ENCODE measurements at regions of chr15 and their contacts with region 1.

Region 1: GRCh38 chr15:68252925-68253534 is 23.5 kb upstream of the CLN6 start:
- DNase-seq: no peak
- ATAC-seq: peak in 3 of 4 donors; percentile 29 to 45 (median 40)
- H3K4me3 ChIP-seq: no peak overlapping the region
- H3K27ac ChIP-seq: peak overlapping the region in 1 of 12 donors; percentile 2
- H3K4me1 ChIP-seq: peaks cover 0 to 19% (median 5%) of the 10 kb centered on the region in 12 donors
- H3K27me3 ChIP-seq: no peaks in the 10 kb centered on the region
- CTCF ChIP-seq: peak; percentile 80 to 93 (median 87)
- POLR2A ChIP-seq: no peak

Region 2: GRCh38 chr15:68229386-68230156 is 23.5 kb before region 1 on chr15 and contains the start of gene CLN6:
- intact Hi-C with region 1: no loop called
- DNase-seq: peak; percentile 82 to 91 (median 85)
- ATAC-seq: peak; percentile 78 to 98 (median 94)
- H3K4me3 ChIP-seq: peak within 1 kb of the TSS; percentile 78 to 99 (median 93)
- H3K27ac ChIP-seq: peak within 1 kb of the TSS in 11 of 12 donors; percentile 61 to 90 (median 78)
- H3K4me1 ChIP-seq: peaks cover 0 to 42% (median 14%) of the 10 kb centered on the region in 12 donors
- H3K27me3 ChIP-seq: no peaks in the 10 kb centered on the region
- CTCF ChIP-seq: peak in 2 of 12 donors; percentile 5 to 11
- POLR2A ChIP-seq: peak in 1 of 2 donors; percentile 56
- total RNA-seq, gene CLN6: 5.6 to 24.1 (median 8.9) TPM

Region 3: GRCh38 chr15:68277603-68278344 is 24.7 kb after region 1 on chr15 and contains the start of gene FEM1B:
- intact Hi-C with region 1: loop called in 1 of 10 experiments (anchors 2 kb)
- DNase-seq: peak; percentile 92 to 95 (median 93)
- ATAC-seq: peak; percentile 90 to 95 (median 94)
- H3K4me3 ChIP-seq: peak within 1 kb of the TSS; percentile 62 to 98 (median 82)
- H3K27ac ChIP-seq: peak within 1 kb of the TSS; percentile 93 to 100 (median 98)
- H3K4me1 ChIP-seq: peaks cover 6 to 77% (median 53%) of the 10 kb centered on the region in 12 donors
- H3K27me3 ChIP-seq: no peaks in the 10 kb centered on the region
- CTCF ChIP-seq: peak in 2 of 12 donors; percentile 12 to 13
- POLR2A ChIP-seq: peak in 1 of 2 donors; percentile 19
- total RNA-seq, gene FEM1B: 30.2 to 94.0 (median 61.2) TPM

Region 4: GRCh38 chr15:68298882-68299381 is 45.9 kb after region 1 on chr15:
- intact Hi-C with region 1: loop called in 5 of 10 experiments (anchors 5 kb)
- DNase-seq: no peak
- ATAC-seq: peak in 3 of 4 donors; percentile 51 to 69 (median 61)
- H3K4me3 ChIP-seq: peak overlapping the region in 10 of 12 donors; percentile 8 to 53 (median 40)
- H3K27ac ChIP-seq: peak overlapping the region in 11 of 12 donors; percentile 13 to 78 (median 47)
- H3K4me1 ChIP-seq: peaks cover 0 to 60% (median 27%) of the 10 kb centered on the region in 12 donors
- H3K27me3 ChIP-seq: no peaks in the 10 kb centered on the region
- CTCF ChIP-seq: no peak
- POLR2A ChIP-seq: no peak

Region 5: DNA sequence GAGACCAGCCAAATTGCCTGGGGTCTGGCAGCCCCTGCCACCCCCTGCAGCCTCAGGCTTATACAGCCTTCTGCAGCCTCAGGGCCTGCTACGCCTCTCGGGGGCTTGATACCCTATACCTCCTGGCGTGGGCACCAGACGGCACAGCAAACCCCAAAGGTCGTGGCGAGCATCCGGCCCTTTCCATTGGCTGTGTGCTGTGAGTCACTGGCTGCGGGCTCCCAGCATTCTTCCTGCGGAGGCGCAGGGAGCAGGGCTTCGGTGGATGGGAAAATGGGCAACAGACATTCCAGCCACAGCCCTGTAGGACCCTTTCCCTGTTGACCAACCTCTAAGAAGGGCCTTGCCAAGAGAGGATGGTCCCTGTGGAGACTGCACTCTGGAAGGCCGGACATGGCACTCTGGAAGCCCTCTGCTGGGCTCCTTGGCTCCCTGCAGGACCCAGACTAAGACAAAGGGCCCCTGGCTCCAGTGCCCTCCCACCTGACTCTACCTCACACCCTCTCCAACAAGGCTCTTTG is 119.3 kb after region 1 on chr15:
- intact Hi-C with region 1: loop called in 1 of 10 experiments (anchors 5 kb)
- DNase-seq: peak in 3 of 5 donors; percentile 25 to 53 (median 29)
- ATAC-seq: peak; percentile 29 to 66 (median 58)
- H3K4me3 ChIP-seq: no peak overlapping the region
- H3K27ac ChIP-seq: no peak overlapping the region
- H3K4me1 ChIP-seq: peaks cover 6 to 35% (median 16%) of the 10 kb centered on the region in 12 donors
- H3K27me3 ChIP-seq: no peaks in the 10 kb centered on the region
- CTCF ChIP-seq: peak; percentile 32 to 60 (median 46)
- POLR2A ChIP-seq: no peak

Region 6: GRCh38 chr15:68383161-68384074 is 130.4 kb after region 1 on chr15:
- intact Hi-C with region 1: loop called in 9 of 10 experiments (anchors 1 to 10 kb)
- DNase-seq: peak in 2 of 5 donors; percentile 9 to 25
- ATAC-seq: peak in 3 of 4 donors; percentile 53 to 67 (median 64)
- H3K4me3 ChIP-seq: no peak overlapping the region
- H3K27ac ChIP-seq: no peak overlapping the region
- H3K4me1 ChIP-seq: peaks cover 0 to 15% (median 0%) of the 10 kb centered on the region in 12 donors
- H3K27me3 ChIP-seq: peaks cover 0 to 2% (median 0%) of the 10 kb centered on the region in 9 donors
- CTCF ChIP-seq: peak; percentile 71 to 87 (median 80)
- POLR2A ChIP-seq: no peak

Region 7: GRCh38 chr15:68389936-68390790 is 137.1 kb after region 1 on chr15:
- intact Hi-C with region 1: loop called in 2 of 10 experiments (anchors 5 to 10 kb)
- DNase-seq: peak in 3 of 5 donors; percentile 5 to 16 (median 16)
- ATAC-seq: peak in 2 of 4 donors; percentile 18 to 84
- H3K4me3 ChIP-seq: no peak overlapping the region
- H3K27ac ChIP-seq: no peak overlapping the region
- H3K4me1 ChIP-seq: peaks cover 0 to 16% (median 0%) of the 10 kb centered on the region in 12 donors
- H3K27me3 ChIP-seq: peaks cover 0 to 4% (median 0%) of the 10 kb centered on the region in 9 donors
- CTCF ChIP-seq: no peak
- POLR2A ChIP-seq: no peak

Region 8: GRCh38 chr15:68733666-68734065 is 480.6 kb after region 1 on chr15:
- intact Hi-C with region 1: no loop called
- DNase-seq: no peak
- ATAC-seq: no peak
- H3K4me3 ChIP-seq: no peak overlapping the region
- H3K27ac ChIP-seq: no peak overlapping the region
- H3K4me1 ChIP-seq: peaks cover 3 to 60% (median 37%) of the 10 kb centered on the region in 12 donors
- H3K27me3 ChIP-seq: no peaks in the 10 kb centered on the region
- CTCF ChIP-seq: no peak
- POLR2A ChIP-seq: no peak

Region 9: GRCh38 chr15:68924866-68925560 is 672.0 kb after region 1 on chr15:
- intact Hi-C with region 1: loop called in 1 of 10 experiments (anchors 5 kb)
- DNase-seq: peak; percentile 58 to 81 (median 71)
- ATAC-seq: peak in 3 of 4 donors; percentile 86 to 91 (median 88)
- H3K4me3 ChIP-seq: no peak overlapping the region
- H3K27ac ChIP-seq: no peak overlapping the region
- H3K4me1 ChIP-seq: peaks cover 0 to under 1% (median 0%) of the 10 kb centered on the region in 12 donors
- H3K27me3 ChIP-seq: peaks cover 0 to 5% (median 0%) of the 10 kb centered on the region in 9 donors
- CTCF ChIP-seq: peak; percentile 62 to 92 (median 76)
- POLR2A ChIP-seq: no peak